Naive thymus-derived CD4-positive, alpha-beta T cell (primary cell): ENCODE measurements at regions of chr2 and their contacts with region 1.

Region 1: DNA sequence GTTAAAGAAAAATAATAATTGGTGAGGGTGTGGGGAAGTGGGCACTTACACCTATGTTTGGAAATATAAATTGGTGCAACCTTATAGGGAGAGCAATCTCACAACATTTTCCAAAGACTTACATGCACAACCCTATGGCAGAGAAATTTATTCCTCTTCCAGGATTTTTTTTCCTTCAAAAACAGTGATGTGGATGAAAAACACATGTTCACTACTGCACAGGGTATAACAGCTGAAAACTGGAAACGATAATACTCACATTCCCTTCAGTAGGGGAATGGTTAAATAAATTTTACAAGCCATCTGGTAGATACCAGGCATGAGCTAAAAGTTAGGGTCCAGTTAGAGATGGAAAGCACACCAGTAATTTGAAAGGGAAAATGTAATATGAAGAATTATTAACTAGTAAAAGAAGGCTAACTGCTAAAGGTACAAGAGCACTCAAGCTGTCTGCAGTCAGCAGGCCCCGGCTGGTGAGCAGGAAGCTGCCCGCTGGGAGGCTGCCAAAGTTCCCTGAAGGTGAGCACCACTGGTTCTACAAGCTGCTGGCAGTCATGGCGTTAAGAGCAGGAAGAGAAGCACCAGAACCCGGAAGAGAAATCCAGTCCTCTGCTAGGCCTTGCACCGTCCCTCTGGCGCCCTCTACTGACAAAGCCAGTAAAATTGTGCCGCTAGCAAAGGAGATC is 28.4 kb upstream of the CASP8 start:
- DNase-seq: peak; percentile 75 to 95 (median 91)
- ATAC-seq: peak; percentile 79
- H3K4me3 ChIP-seq: peak overlapping the region; percentile 70
- H3K4me3 Mint-ChIP-seq: peak overlapping the region; percentile 66 to 99 (median 96)
- H3K27ac ChIP-seq: no peak overlapping the region
- H3K27ac Mint-ChIP-seq: peak overlapping the region; percentile 85 to 98 (median 95)
- H3K4me1 ChIP-seq: peaks cover 27 to 32% of the 10 kb centered on the region in 2 donors
- H3K4me1 Mint-ChIP-seq: peaks cover 28 to 77% (median 67%) of the 10 kb centered on the region in 7 donors
- H3K27me3 ChIP-seq: no peaks in the 10 kb centered on the region
- H3K27me3 Mint-ChIP-seq: no peaks in the 10 kb centered on the region

Region 2: GRCh38 chr2:200888704-200889625 is 343.0 kb before region 1 on chr2 and contains the starts of genes NIF3L1 and PPIL3:
- CTCF ChIA-PET with region 1: no interaction called
- POLR2A ChIA-PET with region 1: interaction called, 4 read pairs
- intact Hi-C with region 1: loop called (anchors 1 to 5 kb)
- DNase-seq: peak; percentile 88 to 97 (median 95)
- ATAC-seq: peak; percentile 89
- H3K4me3 ChIP-seq: peak within 1 kb of the TSS; percentile 83
- H3K4me3 Mint-ChIP-seq: peak within 1 kb of the TSS; percentile 88 to 100 (median 96)
- H3K27ac ChIP-seq: peak within 1 kb of the TSS; percentile 86
- H3K27ac Mint-ChIP-seq: peak within 1 kb of the TSS; percentile 97 to 100 (median 100)
- H3K4me1 ChIP-seq: peaks cover 23 to 26% of the 10 kb centered on the region in 2 donors
- H3K4me1 Mint-ChIP-seq: peaks cover 35 to 75% (median 60%) of the 10 kb centered on the region in 7 donors
- H3K27me3 ChIP-seq: no peaks in the 10 kb centered on the region
- H3K27me3 Mint-ChIP-seq: no peaks in the 10 kb centered on the region
- total RNA-seq, gene NIF3L1: 11.5 to 33.9 (median 31.4) TPM
- total RNA-seq, gene PPIL3: 28.5 to 69.7 (median 49.1) TPM

Region 3: DNA sequence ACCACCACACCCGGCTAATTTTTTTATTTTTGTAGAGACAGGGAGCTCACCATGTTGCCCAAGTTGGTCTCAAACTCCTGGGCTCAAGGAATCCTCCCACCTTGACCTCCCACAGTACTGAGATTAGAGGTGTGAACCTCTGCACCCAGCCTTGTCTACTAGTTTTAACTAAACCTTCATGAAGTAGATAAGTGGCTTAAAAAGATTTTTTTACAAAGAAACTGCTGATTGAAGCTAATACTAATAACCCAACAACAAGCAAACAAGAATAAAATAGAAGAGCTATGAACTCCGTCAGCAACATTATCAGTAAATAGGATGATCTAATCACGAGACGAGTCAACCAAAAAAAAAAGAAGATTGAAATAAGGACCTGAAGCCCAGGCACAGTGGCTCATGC is 141.3 kb before region 1 on chr2:
- CTCF ChIA-PET with region 1: no interaction called
- POLR2A ChIA-PET with region 1: no interaction called
- intact Hi-C with region 1: no loop called
- DNase-seq: no peak
- ATAC-seq: no peak
- H3K4me3 ChIP-seq: no peak overlapping the region
- H3K4me3 Mint-ChIP-seq: no peak overlapping the region
- H3K27ac ChIP-seq: no peak overlapping the region
- H3K27ac Mint-ChIP-seq: no peak overlapping the region
- H3K4me1 ChIP-seq: no peaks in the 10 kb centered on the region
- H3K4me1 Mint-ChIP-seq: peaks cover 0 to 3% (median 0%) of the 10 kb centered on the region in 7 donors
- H3K27me3 ChIP-seq: no peaks in the 10 kb centered on the region
- H3K27me3 Mint-ChIP-seq: no peaks in the 10 kb centered on the region

Region 4: DNA sequence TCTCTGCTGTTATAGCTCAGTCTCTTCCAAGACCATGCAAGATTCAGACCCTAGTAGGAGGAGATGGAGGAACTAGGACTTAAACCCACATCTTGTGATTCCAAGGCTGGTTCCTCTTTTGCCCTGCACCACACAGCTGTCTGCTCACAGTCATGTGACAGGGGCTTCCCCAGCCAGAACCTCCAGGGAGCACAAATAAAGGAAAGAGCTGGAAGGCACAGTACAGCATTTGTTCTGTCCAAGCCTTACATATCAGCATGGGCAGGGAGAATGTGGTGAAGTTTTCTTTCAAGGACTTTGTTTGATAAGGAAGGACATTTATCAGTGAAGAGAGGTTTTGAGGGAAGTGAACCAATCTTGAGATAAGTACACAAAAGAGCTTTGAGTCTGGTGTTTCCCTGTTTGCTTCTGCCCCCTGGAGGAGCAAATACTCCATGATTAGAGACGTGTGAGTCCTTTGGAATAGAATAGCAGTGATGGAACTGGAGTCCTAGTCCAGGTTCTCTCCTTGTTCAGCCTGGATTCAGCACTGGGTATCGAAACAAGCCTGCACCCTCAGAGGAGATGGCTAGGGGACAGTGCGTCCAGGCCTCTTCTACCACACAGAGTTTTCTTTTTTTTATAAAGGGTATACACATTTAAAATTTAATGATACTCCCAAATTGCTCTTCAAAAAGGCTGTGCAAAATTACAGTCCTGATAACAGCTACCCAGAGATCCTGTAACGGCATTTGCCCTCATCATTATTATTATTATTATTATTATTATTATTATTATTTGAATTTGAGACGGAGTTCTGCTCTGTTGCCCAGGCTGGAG is 73.6 kb before region 1 on chr2:
- CTCF ChIA-PET with region 1: interaction called, 15 read pairs
- POLR2A ChIA-PET with region 1: no interaction called
- intact Hi-C with region 1: no loop called
- DNase-seq: peak in 7 of 9 donors; percentile 62 to 78 (median 72)
- ATAC-seq: peak; percentile 92
- H3K4me3 ChIP-seq: no peak overlapping the region
- H3K4me3 Mint-ChIP-seq: peak overlapping the region in 3 of 10 donors; percentile 16 to 64 (median 33)
- H3K27ac ChIP-seq: peak overlapping the region; percentile 52
- H3K27ac Mint-ChIP-seq: peak overlapping the region; percentile 26 to 93 (median 89)
- H3K4me1 ChIP-seq: peaks cover 6 to 7% of the 10 kb centered on the region in 2 donors
- H3K4me1 Mint-ChIP-seq: peaks cover 12 to 35% (median 16%) of the 10 kb centered on the region in 7 donors
- H3K27me3 ChIP-seq: no peaks in the 10 kb centered on the region
- H3K27me3 Mint-ChIP-seq: no peaks in the 10 kb centered on the region

Region 5: GRCh38 chr2:201220102-201220570 is 11.8 kb before region 1 on chr2:
- CTCF ChIA-PET with region 1: interaction called, 15 read pairs
- POLR2A ChIA-PET with region 1: interaction called, 13 read pairs
- intact Hi-C with region 1: no loop called
- DNase-seq: no peak
- ATAC-seq: no peak
- H3K4me3 ChIP-seq: no peak overlapping the region
- H3K4me3 Mint-ChIP-seq: peak overlapping the region; percentile 6 to 77 (median 42)
- H3K27ac ChIP-seq: peak overlapping the region; percentile 62
- H3K27ac Mint-ChIP-seq: peak overlapping the region; percentile 61 to 97 (median 90)
- H3K4me1 ChIP-seq: peaks cover 0 to 44% of the 10 kb centered on the region in 2 donors
- H3K4me1 Mint-ChIP-seq: peaks cover 28 to 78% (median 71%) of the 10 kb centered on the region in 7 donors
- H3K27me3 ChIP-seq: no peaks in the 10 kb centered on the region
- H3K27me3 Mint-ChIP-seq: no peaks in the 10 kb centered on the region

Region 6: DNA sequence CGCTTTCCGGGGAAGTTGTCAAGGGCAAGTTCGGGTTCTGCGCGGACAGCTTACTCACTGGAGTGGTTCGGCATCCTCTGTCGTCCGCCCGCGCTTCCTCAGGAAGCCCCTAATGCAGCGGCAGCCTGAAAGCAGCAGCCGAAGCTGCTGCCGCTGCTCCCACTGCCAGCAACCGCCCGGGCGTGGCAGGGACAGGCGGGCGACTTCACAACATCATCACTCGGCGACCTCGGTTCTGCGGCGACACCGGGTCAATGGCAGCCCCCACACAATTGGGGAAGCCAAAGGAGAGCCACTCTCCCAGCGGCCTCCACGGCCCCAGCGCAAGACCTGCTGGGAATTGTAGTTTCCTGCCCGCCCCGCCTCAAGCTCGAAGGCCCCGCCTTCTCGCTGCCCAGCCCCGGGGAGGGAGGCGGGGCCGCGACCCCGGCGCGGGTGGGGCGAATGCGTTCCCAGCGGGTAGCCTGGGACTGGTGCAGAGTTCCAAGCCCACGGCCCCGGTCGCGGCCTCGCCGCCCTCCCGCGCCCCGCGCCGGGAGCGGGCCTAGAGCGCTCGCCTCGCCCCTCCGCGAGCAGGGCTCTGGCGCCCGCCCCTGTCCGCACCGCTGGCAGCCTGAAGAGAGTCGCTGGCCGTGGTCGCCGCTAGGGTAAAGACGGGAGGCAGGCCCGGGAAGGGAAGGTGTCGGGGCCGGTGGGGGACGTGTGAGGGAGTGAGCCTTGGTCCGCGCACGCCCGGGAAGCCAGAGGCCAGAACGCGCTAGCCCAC is 219.6 kb after region 1 on chr2 and contains the starts of genes STRADB and TRAK2:
- CTCF ChIA-PET with region 1: interaction called, 6 read pairs
- POLR2A ChIA-PET with region 1: interaction called, 17 read pairs
- intact Hi-C with region 1: loop called (anchors 1 kb)
- DNase-seq: peak; percentile 84 to 95 (median 92)
- ATAC-seq: peak; percentile 96
- H3K4me3 ChIP-seq: peak within 1 kb of the TSS; percentile 96
- H3K4me3 Mint-ChIP-seq: peak within 1 kb of the TSS; percentile 94 to 98 (median 97)
- H3K27ac ChIP-seq: peak within 1 kb of the TSS; percentile 83
- H3K27ac Mint-ChIP-seq: peak within 1 kb of the TSS; percentile 85 to 97 (median 95)
- H3K4me1 ChIP-seq: peaks cover 33 to 39% of the 10 kb centered on the region in 2 donors
- H3K4me1 Mint-ChIP-seq: peaks cover 27 to 69% (median 41%) of the 10 kb centered on the region in 7 donors
- H3K27me3 ChIP-seq: no peaks in the 10 kb centered on the region
- H3K27me3 Mint-ChIP-seq: peaks cover 0 to 8% (median 0%) of the 10 kb centered on the region in 5 donors
- total RNA-seq, gene STRADB: 11.9 to 18.4 (median 16.1) TPM
- total RNA-seq, gene TRAK2: 27.8 to 47.6 (median 35.2) TPM

Region 7: DNA sequence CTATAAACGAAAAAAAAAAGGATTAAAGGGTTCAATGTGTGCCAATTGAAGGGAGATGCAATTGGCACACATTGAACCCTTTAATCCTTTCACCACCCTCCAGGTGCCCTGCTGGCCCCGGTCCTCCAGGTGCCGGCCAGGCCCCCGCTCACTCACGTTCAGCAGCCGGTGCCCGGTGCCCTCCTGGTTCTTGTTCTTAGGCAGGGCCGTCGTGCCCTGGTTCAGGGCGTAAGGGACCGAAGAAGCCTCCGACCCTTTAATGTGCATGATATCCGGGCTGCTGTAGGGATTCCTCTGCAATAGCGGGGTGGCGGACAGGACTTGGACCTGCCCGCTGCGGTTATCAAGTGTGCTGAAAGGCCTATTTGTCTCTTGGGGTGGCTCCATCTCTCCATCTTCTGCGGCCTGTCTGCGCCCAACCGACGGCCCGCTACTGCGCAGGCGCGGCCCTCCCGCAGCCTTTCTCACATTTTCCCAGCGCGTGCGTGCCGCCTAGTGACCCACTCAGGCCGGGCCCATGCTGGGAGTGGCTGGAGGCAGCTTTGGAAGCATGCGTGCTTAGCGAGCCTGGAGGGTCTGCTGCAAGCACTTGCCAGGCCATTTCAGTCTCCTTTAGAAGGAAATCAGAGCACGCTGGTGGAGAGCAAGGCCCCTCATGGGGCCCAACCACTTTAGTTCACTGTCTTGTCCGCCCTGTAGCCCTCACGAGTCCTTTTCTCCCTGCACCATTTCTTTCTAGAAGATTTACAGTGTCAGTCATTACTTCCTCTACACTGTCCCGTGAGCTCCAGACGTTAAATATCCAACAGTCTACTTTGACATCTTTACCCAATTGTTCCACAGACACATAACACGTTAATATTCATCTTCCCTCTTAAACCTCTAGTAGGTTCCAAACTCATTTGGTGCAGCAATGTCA is 387.1 kb after region 1 on chr2:
- CTCF ChIA-PET with region 1: no interaction called
- POLR2A ChIA-PET with region 1: no interaction called
- intact Hi-C with region 1: no loop called
- DNase-seq: no peak
- ATAC-seq: peak; percentile 16
- H3K4me3 ChIP-seq: no peak overlapping the region
- H3K4me3 Mint-ChIP-seq: no peak overlapping the region
- H3K27ac ChIP-seq: no peak overlapping the region
- H3K27ac Mint-ChIP-seq: no peak overlapping the region
- H3K4me1 ChIP-seq: no peaks in the 10 kb centered on the region
- H3K4me1 Mint-ChIP-seq: no peaks in the 10 kb centered on the region
- H3K27me3 ChIP-seq: no peaks in the 10 kb centered on the region
- H3K27me3 Mint-ChIP-seq: peaks cover 0 to 19% (median 0%) of the 10 kb centered on the region in 5 donors

Region 8: GRCh38 chr2:202056392-202057010 is 824.6 kb after region 1 on chr2:
- CTCF ChIA-PET with region 1: interaction called, 3 read pairs
- POLR2A ChIA-PET with region 1: no interaction called
- intact Hi-C with region 1: loop called in 1 of 2 experiments (anchors 5 kb)
- DNase-seq: peak in 3 of 9 donors; percentile 8 to 11 (median 9)
- ATAC-seq: no peak
- H3K4me3 ChIP-seq: no peak overlapping the region
- H3K4me3 Mint-ChIP-seq: no peak overlapping the region
- H3K27ac ChIP-seq: no peak overlapping the region
- H3K27ac Mint-ChIP-seq: no peak overlapping the region
- H3K4me1 ChIP-seq: no peaks in the 10 kb centered on the region
- H3K4me1 Mint-ChIP-seq: no peaks in the 10 kb centered on the region
- H3K27me3 ChIP-seq: no peaks in the 10 kb centered on the region
- H3K27me3 Mint-ChIP-seq: peaks cover 35 to 47% (median 41%) of the 10 kb centered on the region in 5 donors